Activated CD4-positive, alpha-beta T cell treated with anti-CD3 and anti-CD28 coated beads, Interleukin-2, amount 10 ng/mL, durations not matched to agents 7 days and 5 days (primary cell): ENCODE measurements at regions of chr14 and their contacts with region 1.

Region 1: GRCh38 chr14:64704143-64704742 is at the start of gene PLEKHG3:
- DNase-seq: peak; percentile 31
- H3K4me3 Mint-ChIP-seq: peak within 1 kb of the TSS; percentile 75
- H3K27ac Mint-ChIP-seq: peak within 1 kb of the TSS; percentile 73
- H3K4me1 Mint-ChIP-seq: peaks cover 68% of the 10 kb centered on the region
- H3K27me3 Mint-ChIP-seq: peaks cover 65% of the 10 kb centered on the region
- total RNA-seq, gene PLEKHG3: 36.0 to 39.5 TPM

Region 2: GRCh38 chr14:64671591-64671990 is 32.7 kb before region 1 on chr14:
- CTCF ChIA-PET with region 1: interaction called, 10 read pairs
- POLR2A ChIA-PET with region 1: no interaction called
- DNase-seq: peak; percentile 58
- H3K4me3 Mint-ChIP-seq: no peak overlapping the region
- H3K27ac Mint-ChIP-seq: no peak overlapping the region
- H3K4me1 Mint-ChIP-seq: peaks cover 42% of the 10 kb centered on the region
- H3K27me3 Mint-ChIP-seq: peaks cover 9% of the 10 kb centered on the region